B cell (primary cell): ENCODE measurements at regions of chr22 and their contacts with region 1.

Region 1: GRCh38 chr22:20916983-20917810 is at the start of gene CRKL:
- DNase-seq: peak; percentile 98
- ATAC-seq: peak; percentile 97
- H3K4me3 ChIP-seq: peak within 1 kb of the TSS; percentile 84 to 96 (median 94)
- H3K4me3 Mint-ChIP-seq: peak within 1 kb of the TSS; percentile 95
- H3K27ac ChIP-seq: peak within 1 kb of the TSS; percentile 59 to 92
- H3K27ac Mint-ChIP-seq: peak within 1 kb of the TSS; percentile 88
- H3K4me1 ChIP-seq: peaks cover 23 to 33% of the 10 kb centered on the region in 2 donors
- H3K4me1 Mint-ChIP-seq: peaks cover 39% of the 10 kb centered on the region
- H3K27me3 ChIP-seq: no peaks in the 10 kb centered on the region
- H3K27me3 Mint-ChIP-seq: no peaks in the 10 kb centered on the region
- CTCF ChIP-seq: peak; percentile 88
- total RNA-seq, gene CRKL: 75.3 and 76.7 TPM in 2 replicates

Region 2: DNA sequence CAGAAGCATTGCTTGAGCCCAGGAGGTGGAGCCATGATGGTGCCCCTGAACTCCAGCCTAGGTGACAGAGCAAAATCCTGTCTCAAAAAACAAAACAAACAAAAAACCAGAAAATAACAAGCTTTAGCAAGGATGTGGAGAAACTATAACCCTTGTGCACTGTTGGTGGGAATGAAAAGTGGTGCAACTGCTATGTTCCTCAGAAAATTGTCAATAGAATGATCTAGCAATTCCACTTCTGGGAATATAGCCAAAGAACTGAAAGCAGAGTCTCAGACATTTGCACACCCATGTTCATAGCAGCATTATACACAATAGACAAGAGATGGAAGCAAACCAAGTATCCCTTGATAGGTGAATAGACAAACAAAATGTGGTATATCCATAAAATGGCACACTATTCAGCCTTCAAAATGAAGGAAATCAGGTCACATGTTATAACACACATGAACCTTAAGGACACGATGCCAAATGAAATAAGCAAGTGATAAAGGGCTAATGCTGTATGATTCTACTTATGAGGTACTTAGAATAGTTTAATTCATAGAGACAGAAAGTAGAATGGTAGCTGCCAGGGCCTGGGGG is 437.5 kb before region 1 on chr22:
- CTCF ChIA-PET with region 1: no interaction called
- POLR2A ChIA-PET with region 1: no interaction called
- intact Hi-C with region 1: no loop called
- DNase-seq: no peak
- ATAC-seq: no peak
- H3K4me3 ChIP-seq: no peak overlapping the region
- H3K4me3 Mint-ChIP-seq: no peak overlapping the region
- H3K27ac ChIP-seq: no peak overlapping the region
- H3K27ac Mint-ChIP-seq: no peak overlapping the region
- H3K4me1 ChIP-seq: no peaks in the 10 kb centered on the region
- H3K4me1 Mint-ChIP-seq: no peaks in the 10 kb centered on the region
- H3K27me3 ChIP-seq: no peaks in the 10 kb centered on the region
- H3K27me3 Mint-ChIP-seq: no peaks in the 10 kb centered on the region
- CTCF ChIP-seq: no peak

Region 3: GRCh38 chr22:20957316-20958101 is 40.3 kb after region 1 on chr22:
- CTCF ChIA-PET with region 1: interaction called, 5 read pairs
- POLR2A ChIA-PET with region 1: no interaction called
- intact Hi-C with region 1: loop called (anchors 5 kb)
- DNase-seq: peak; percentile 45
- ATAC-seq: peak; percentile 69
- H3K4me3 ChIP-seq: peak overlapping the region in 4 of 5 experiments; percentile 55 to 69 (median 60)
- H3K4me3 Mint-ChIP-seq: peak overlapping the region; percentile 83
- H3K27ac ChIP-seq: peak overlapping the region in 1 of 2 donors; percentile 10
- H3K27ac Mint-ChIP-seq: no peak overlapping the region
- H3K4me1 ChIP-seq: peaks cover 16 to 23% of the 10 kb centered on the region in 2 donors
- H3K4me1 Mint-ChIP-seq: peaks cover 20% of the 10 kb centered on the region
- H3K27me3 ChIP-seq: peaks cover 0 to 26% (median 7%) of the 10 kb centered on the region in 4 experiments
- H3K27me3 Mint-ChIP-seq: peaks cover 13% of the 10 kb centered on the region
- CTCF ChIP-seq: no peak